A549 (cell line): ENCODE measurements at regions of chr1 and their contacts with region 1.

Region 1: DNA sequence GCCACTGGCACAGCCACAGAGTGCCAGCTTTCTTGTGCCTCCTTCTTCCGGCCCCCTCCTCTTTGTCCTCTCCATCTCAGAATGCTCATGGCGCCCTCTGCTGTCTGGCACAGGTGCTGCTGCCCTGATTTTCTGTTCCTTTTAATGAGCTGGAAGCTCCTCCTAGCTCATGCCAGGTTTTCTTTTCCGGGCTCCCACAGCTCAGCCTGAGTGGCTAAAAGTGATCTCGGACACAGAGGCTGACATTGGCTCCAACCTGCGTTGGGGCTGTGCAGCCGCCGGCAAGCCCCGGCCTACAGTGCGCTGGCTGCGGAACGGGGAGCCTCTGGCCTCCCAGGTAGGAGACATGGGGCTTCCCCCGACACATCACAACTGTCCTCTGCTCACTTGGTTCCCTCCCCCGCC is 18.7 kb downstream of the CNTN2 start:
- DNase-seq: peak; percentile 62 to 78
- ATAC-seq: peak; percentile 53 to 86; a peak in 4 of 6 replicates
- H3K4me3 ChIP-seq: no peak overlapping the region
- H3K27ac ChIP-seq: no peak overlapping the region
- H3K4me1 ChIP-seq: no peaks in the 10 kb centered on the region
- CTCF ChIP-seq: peak; percentile 88
- EP300 ChIP-seq: no peak
- POLR2A ChIP-seq: no peak
- RAD21 ChIP-seq: peak; percentile 80 to 89

Region 2: GRCh38 chr1:204711947-204712701 is 349.5 kb before region 1 on chr1:
- CTCF ChIA-PET with region 1: no interaction called
- POLR2A ChIA-PET with region 1: no interaction called
- DNase-seq: no peak
- ATAC-seq: peak in 1 of 2 experiments; percentile 10; a peak in 1 of 6 replicates
- H3K4me3 ChIP-seq: no peak overlapping the region
- H3K27ac ChIP-seq: peak overlapping the region in 1 of 2 experiments; percentile 35; a peak in 2 of 6 replicates
- H3K4me1 ChIP-seq: peaks cover 30% of the 10 kb centered on the region
- CTCF ChIP-seq: no peak
- EP300 ChIP-seq: no peak
- POLR2A ChIP-seq: no peak
- RAD21 ChIP-seq: no peak

Region 3: DNA sequence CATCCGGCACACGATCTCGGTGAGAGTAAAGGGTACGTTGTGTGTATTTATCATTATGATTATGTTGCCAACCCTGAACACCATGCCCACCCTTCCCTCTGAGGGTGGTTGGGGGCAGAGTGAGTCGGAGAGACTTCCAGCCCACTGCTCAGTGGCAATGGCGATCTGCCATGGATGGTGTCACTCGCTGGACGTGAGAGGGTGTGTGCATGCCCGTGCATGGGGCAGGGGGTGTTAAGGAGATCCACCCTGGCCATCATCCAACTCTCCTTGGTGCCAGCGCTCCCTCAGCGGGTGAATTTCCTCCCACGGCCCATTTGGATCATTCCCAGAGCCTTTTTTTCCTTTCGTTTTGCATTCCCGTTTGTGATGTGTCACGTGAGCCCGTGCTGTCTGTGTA is 92.7 kb before region 1 on chr1:
- CTCF ChIA-PET with region 1: interaction called, 115 read pairs
- POLR2A ChIA-PET with region 1: no interaction called
- DNase-seq: no peak
- ATAC-seq: no peak
- H3K4me3 ChIP-seq: no peak overlapping the region
- H3K27ac ChIP-seq: no peak overlapping the region
- H3K4me1 ChIP-seq: peaks cover 12% of the 10 kb centered on the region
- CTCF ChIP-seq: no peak
- EP300 ChIP-seq: no peak
- POLR2A ChIP-seq: no peak
- RAD21 ChIP-seq: no peak

Region 4: DNA sequence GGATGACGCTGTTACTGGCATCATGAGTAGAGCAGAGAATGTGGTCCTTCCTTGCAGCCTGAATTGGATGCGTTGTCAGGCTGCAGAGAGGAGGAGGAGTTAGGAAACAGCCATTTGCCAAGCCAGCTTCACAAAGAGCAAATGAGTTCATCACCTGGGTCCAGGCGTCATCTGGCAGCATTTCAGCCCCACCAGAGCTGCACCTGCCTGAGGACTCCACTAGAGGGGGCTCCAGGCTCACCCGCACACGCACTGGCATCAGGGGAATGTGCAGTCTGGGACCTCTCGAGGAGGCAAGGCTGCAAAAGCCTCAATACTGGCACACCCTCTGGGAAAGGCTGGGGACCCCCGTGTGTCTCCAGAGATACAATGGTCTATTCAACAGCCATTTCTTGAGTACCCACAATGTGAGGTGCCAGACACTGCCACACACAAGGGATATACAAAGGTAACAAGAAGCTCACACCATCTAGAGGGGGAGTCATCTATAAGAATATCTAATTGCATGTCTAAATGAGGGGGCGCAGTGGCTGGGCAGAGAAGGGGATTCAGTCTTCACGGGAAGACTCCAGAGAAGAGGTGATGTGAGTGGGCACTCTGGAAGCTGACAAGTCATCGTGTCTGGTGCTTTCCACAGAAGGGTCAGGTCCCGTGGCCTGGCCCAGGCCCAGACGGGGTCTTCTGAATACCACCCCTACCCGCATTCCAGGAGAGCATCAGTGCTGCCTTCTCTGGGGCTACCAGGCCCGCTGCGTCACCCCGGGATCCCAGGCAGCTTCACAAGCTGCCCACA is 72.2 kb before region 1 on chr1:
- CTCF ChIA-PET with region 1: interaction called, 152 read pairs
- POLR2A ChIA-PET with region 1: no interaction called
- DNase-seq: peak; percentile 63 to 96
- ATAC-seq: peak; percentile 76 to 90
- H3K4me3 ChIP-seq: no peak overlapping the region
- H3K27ac ChIP-seq: no peak overlapping the region
- H3K4me1 ChIP-seq: no peaks in the 10 kb centered on the region
- CTCF ChIP-seq: peak; percentile 93
- EP300 ChIP-seq: no peak
- POLR2A ChIP-seq: no peak
- RAD21 ChIP-seq: peak; percentile 92 to 97

Region 5: GRCh38 chr1:205013683-205014367 is 47.8 kb before region 1 on chr1:
- CTCF ChIA-PET with region 1: interaction called, 22 read pairs
- POLR2A ChIA-PET with region 1: no interaction called
- DNase-seq: no peak
- ATAC-seq: no peak
- H3K4me3 ChIP-seq: no peak overlapping the region
- H3K27ac ChIP-seq: no peak overlapping the region
- H3K4me1 ChIP-seq: no peaks in the 10 kb centered on the region
- CTCF ChIP-seq: no peak
- EP300 ChIP-seq: no peak
- POLR2A ChIP-seq: no peak
- RAD21 ChIP-seq: no peak

Region 6: DNA sequence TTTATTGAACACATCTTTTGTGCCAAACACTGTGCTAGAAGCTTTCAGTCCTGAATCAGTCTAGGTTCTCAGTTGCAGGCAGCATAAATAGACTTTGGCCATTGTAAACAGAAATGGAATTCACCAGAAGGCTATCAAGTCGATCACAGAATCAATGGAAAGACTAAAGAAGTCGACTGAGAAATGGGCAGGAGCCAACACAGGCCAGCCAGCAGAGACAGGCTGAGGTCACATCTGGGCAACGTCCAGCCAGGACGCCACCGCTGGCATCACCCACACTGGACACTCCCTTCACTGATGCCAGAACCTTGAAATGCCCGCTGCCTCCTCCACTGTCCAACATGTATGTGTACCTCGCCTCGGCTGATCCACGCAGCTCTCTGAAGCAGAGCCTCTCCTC is 24.1 kb before region 1 on chr1:
- CTCF ChIA-PET with region 1: interaction called, 34 read pairs
- POLR2A ChIA-PET with region 1: no interaction called
- DNase-seq: no peak
- ATAC-seq: no peak
- H3K4me3 ChIP-seq: no peak overlapping the region
- H3K27ac ChIP-seq: no peak overlapping the region
- H3K4me1 ChIP-seq: no peaks in the 10 kb centered on the region
- CTCF ChIP-seq: no peak
- EP300 ChIP-seq: no peak
- POLR2A ChIP-seq: no peak
- RAD21 ChIP-seq: no peak

Region 7: GRCh38 chr1:205077158-205077933 is 15.7 kb after region 1 on chr1:
- CTCF ChIA-PET with region 1: interaction called, 134 read pairs
- POLR2A ChIA-PET with region 1: no interaction called
- DNase-seq: no peak
- ATAC-seq: no peak
- H3K4me3 ChIP-seq: no peak overlapping the region
- H3K27ac ChIP-seq: no peak overlapping the region
- H3K4me1 ChIP-seq: no peaks in the 10 kb centered on the region
- CTCF ChIP-seq: no peak
- EP300 ChIP-seq: no peak
- POLR2A ChIP-seq: no peak
- RAD21 ChIP-seq: no peak

Region 8: DNA sequence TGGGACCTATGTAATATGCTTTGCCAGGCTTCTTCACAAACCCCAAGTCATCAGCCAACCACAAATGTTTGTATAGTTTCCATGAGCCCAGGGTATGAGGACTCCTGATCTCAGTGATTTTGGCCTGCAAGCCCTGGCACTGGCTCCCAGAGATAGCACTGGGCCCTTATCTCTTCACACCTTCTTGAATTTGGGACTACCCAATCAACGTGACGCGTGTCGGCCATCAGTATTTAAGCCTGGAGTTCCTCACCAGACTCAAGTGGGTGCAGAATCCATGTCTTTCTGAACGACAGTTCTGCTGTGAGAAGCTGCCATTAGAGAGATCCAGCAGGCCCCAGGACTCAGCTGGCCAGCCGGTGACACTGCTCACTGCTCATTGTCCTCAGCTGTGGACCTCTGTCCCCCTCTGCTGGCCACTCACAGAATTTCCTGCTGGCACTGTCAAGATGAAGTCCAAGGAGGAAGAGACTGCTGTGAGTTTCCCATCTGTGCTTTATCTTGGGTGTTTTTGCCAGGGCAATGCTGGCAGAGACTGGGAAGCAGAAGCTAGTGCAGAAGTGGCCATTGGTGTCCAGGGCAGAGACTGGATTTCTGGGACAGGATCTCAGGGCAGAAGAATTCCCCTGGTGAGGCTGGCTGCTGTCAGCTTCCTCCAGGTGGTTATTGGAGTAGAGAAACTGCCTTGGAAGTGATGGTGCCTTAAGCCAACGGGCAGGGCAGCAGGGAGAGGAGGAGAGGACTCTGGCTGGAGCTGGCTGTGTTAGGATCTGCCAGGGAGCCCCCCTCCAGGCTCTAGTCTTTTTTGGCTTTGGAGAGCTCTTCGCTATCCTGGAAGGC is 194.5 kb after region 1 on chr1:
- CTCF ChIA-PET with region 1: interaction called, 51 read pairs
- POLR2A ChIA-PET with region 1: no interaction called
- DNase-seq: peak; percentile 82
- ATAC-seq: peak; percentile 91 to 97
- H3K4me3 ChIP-seq: no peak overlapping the region
- H3K27ac ChIP-seq: peak overlapping the region in 1 of 2 experiments; percentile 51; a peak in 3 of 6 replicates
- H3K4me1 ChIP-seq: peaks cover 16% of the 10 kb centered on the region
- CTCF ChIP-seq: peak; percentile 95
- EP300 ChIP-seq: no peak
- POLR2A ChIP-seq: no peak
- RAD21 ChIP-seq: peak; percentile 97 to 100